CD8-positive, alpha-beta memory T cell (primary cell): ENCODE measurements at regions of chr5 and their contacts with region 1.

Region 1: DNA sequence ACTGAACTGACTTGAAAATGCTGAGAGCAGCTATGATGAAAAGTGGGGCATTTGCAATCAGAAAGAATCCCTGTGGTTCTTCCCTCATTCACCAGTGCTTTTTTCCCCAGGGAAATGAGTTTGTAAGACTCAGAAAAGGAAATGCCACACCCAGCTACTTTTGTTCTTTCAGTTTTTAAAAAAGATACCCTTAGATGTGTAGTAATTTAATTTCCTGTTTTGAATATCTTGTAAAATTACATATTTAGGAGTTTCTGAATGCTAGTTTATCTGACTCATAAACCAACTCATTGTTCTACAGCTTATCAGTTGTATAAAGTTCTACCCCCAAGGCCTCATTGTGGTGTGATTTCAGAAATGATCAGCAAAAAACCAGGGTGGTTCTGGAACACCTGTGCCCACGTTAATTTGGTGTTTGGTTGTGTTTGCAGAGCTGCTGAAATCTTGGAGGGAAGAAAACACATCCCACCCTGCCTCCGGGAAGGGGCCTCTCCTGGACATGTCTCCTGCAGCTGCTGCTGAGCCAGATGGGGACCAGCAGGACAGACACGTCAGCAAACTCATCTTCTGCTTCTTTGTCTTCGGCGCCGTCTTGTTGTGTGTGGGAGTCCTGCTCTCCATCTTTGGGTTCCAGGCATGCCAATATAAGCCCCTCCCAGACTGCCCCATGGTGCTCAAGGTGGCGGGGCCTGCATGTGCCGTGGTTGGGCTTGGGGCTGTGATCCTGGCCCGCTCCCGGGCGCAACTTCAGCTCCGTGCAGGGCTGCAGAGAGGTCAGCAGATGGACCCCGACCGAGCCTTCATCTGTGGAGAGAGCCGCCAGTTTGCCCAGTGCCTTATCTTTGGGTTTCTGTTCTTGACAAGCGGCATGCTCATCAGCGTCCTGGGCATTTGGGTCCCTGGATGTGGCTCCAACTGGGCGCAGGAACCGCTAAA is 2.8 kb downstream of the TMEM171 start:
- DNase-seq: no peak
- H3K4me3 ChIP-seq: no peak overlapping the region
- H3K4me3 Mint-ChIP-seq: peak overlapping the region; percentile 35 to 91 (median 72)
- H3K27ac ChIP-seq: no peak overlapping the region
- H3K27ac Mint-ChIP-seq: peak overlapping the region in 7 of 8 donors; percentile 27 to 96 (median 46)
- H3K4me1 ChIP-seq: peaks cover 11% of the 10 kb centered on the region
- H3K4me1 Mint-ChIP-seq: peaks cover 32 to 47% (median 41%) of the 10 kb centered on the region in 3 donors
- H3K27me3 ChIP-seq: peaks cover 7% of the 10 kb centered on the region
- H3K27me3 Mint-ChIP-seq: peaks cover 35 to 55% of the 10 kb centered on the region in 2 donors

Region 2: DNA sequence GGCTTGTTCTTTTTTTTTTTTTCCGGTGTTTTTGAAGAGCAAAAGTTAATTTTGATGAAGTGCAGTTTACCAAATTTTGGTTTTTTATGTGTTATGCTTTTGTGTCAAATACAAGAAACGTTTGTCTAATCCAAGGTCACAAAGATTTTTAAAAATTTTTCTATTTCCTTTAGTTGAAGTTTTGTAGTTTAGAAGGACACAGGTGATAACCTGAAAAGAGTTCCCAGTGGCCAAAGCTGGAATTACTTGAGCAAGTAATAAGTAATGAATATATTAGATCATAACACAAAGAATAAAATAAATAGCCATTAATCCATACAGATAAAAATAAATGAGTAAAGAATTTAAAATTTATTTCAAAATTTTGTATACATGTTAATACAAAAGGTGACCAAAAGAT is 95.8 kb before region 1 on chr5:
- CTCF ChIA-PET with region 1: no interaction called
- POLR2A ChIA-PET with region 1: no interaction called
- DNase-seq: no peak
- H3K4me3 ChIP-seq: no peak overlapping the region
- H3K4me3 Mint-ChIP-seq: no peak overlapping the region
- H3K27ac ChIP-seq: no peak overlapping the region
- H3K27ac Mint-ChIP-seq: no peak overlapping the region
- H3K4me1 ChIP-seq: no peaks in the 10 kb centered on the region
- H3K4me1 Mint-ChIP-seq: no peaks in the 10 kb centered on the region
- H3K27me3 ChIP-seq: no peaks in the 10 kb centered on the region
- H3K27me3 Mint-ChIP-seq: no peaks in the 10 kb centered on the region

Region 3: GRCh38 chr5:73066466-73066865 is 56.7 kb before region 1 on chr5:
- CTCF ChIA-PET with region 1: no interaction called
- POLR2A ChIA-PET with region 1: no interaction called
- DNase-seq: no peak
- H3K4me3 ChIP-seq: no peak overlapping the region
- H3K4me3 Mint-ChIP-seq: no peak overlapping the region
- H3K27ac ChIP-seq: no peak overlapping the region
- H3K27ac Mint-ChIP-seq: no peak overlapping the region
- H3K4me1 ChIP-seq: no peaks in the 10 kb centered on the region
- H3K4me1 Mint-ChIP-seq: no peaks in the 10 kb centered on the region
- H3K27me3 ChIP-seq: no peaks in the 10 kb centered on the region
- H3K27me3 Mint-ChIP-seq: peaks cover 2 to 3% of the 10 kb centered on the region in 2 donors

Region 4: DNA sequence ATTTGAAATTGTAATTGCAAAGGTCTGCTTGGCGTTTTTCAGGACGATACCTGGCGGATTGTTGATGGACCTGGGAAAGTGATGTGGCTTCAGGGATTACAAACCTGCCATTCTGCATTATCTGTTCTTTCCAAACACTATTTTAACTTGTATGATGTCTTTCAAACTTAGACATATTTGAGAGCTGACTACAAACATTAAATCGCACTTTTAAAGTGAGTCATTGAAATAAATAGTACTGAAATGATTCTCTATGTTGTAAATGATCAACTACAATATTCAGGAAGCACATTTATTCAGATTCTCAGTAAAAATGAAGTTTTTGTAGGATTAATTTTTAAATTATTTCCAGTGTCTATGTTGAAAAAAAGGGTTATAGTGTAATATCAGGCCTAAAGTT is 35.1 kb before region 1 on chr5:
- CTCF ChIA-PET with region 1: no interaction called
- POLR2A ChIA-PET with region 1: interaction called, 12 read pairs
- DNase-seq: no peak
- H3K4me3 ChIP-seq: no peak overlapping the region
- H3K4me3 Mint-ChIP-seq: no peak overlapping the region
- H3K27ac ChIP-seq: no peak overlapping the region
- H3K27ac Mint-ChIP-seq: no peak overlapping the region
- H3K4me1 ChIP-seq: no peaks in the 10 kb centered on the region
- H3K4me1 Mint-ChIP-seq: peaks cover 0 to 13% (median 1%) of the 10 kb centered on the region in 3 donors
- H3K27me3 ChIP-seq: no peaks in the 10 kb centered on the region
- H3K27me3 Mint-ChIP-seq: peaks cover 0 to 2% of the 10 kb centered on the region in 2 donors